Aorta (tissue), 5 donors: ENCODE measurements at regions of chr15 and their contacts with region 1.

Region 1: GRCh38 chr15:80512726-80513660 is 108.8 kb downstream of the ARNT2 start:
- DNase-seq: no peak
- ATAC-seq: no peak
- H3K4me3 ChIP-seq: no peak overlapping the region
- H3K27ac ChIP-seq: no peak overlapping the region
- H3K4me1 ChIP-seq: no peaks in the 10 kb centered on the region
- H3K27me3 ChIP-seq: no peaks in the 10 kb centered on the region

Region 2: GRCh38 chr15:80455668-80456442 is 57.1 kb before region 1 on chr15:
- intact Hi-C with region 1: loop called (anchors 5 kb)
- DNase-seq: peak in 1 of 2 donors; percentile 65
- ATAC-seq: peak; percentile 70
- H3K4me3 ChIP-seq: no peak overlapping the region
- H3K27ac ChIP-seq: no peak overlapping the region
- H3K4me1 ChIP-seq: no peaks in the 10 kb centered on the region
- H3K27me3 ChIP-seq: no peaks in the 10 kb centered on the region